ENCODE measurements at regions of chr1 and their contacts with region 1.

Region 1: GRCh38 chr1:192559115-192560006 is 16.2 kb upstream of the RGS1 start:
- DNase-seq: no peak
- H3K4me3 ChIP-seq: no peak overlapping the region
- H3K27ac ChIP-seq: peak overlapping the region; percentile 0 to 21 (median 1)
- H3K4me1 ChIP-seq: no peaks in the 10 kb centered on the region
- H3K27me3 ChIP-seq: no peaks in the 10 kb centered on the region
- CTCF ChIP-seq: no peak
- POLR2A ChIP-seq: no peak

Region 2: GRCh38 chr1:192284927-192285326 is 274.4 kb before region 1 on chr1:
- intact Hi-C with region 1: no loop called
- DNase-seq: no peak
- H3K4me3 ChIP-seq: no peak overlapping the region
- H3K27ac ChIP-seq: no peak overlapping the region
- H3K4me1 ChIP-seq: no peaks in the 10 kb centered on the region
- H3K27me3 ChIP-seq: no peaks in the 10 kb centered on the region
- CTCF ChIP-seq: no peak
- POLR2A ChIP-seq: no peak

Region 3: DNA sequence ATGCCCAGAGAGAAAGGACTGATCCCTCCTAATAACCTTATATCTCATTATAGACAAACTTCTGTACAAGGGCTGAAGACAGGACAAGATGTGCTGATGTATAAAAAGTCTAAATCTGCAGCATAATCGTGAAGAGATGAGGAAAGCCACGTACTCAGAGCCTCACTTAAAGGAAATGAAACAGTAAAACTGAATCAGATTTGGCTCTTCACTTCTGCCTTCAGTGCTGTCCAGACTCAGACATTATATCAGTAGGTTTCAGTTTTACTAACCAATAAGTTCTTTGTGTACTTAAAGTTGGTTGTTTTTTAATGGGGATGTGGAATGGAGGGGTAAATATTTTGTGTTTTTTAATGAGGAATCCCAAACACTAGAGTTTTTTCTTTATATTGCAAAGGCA is 29.1 kb before region 1 on chr1:
- intact Hi-C with region 1: no loop called
- DNase-seq: no peak
- H3K4me3 ChIP-seq: no peak overlapping the region
- H3K27ac ChIP-seq: no peak overlapping the region
- H3K4me1 ChIP-seq: no peaks in the 10 kb centered on the region
- H3K27me3 ChIP-seq: no peaks in the 10 kb centered on the region
- CTCF ChIP-seq: no peak
- POLR2A ChIP-seq: no peak

Region 4: GRCh38 chr1:192575499-192576189 is 16.3 kb after region 1 on chr1 and contains the start of gene RGS1:
- intact Hi-C with region 1: loop called (anchors 2 kb)
- DNase-seq: peak; percentile 41 to 50
- H3K4me3 ChIP-seq: no peak within 1 kb of the TSS
- H3K27ac ChIP-seq: no peak within 1 kb of the TSS
- H3K4me1 ChIP-seq: peaks cover 3 to 7% of the 10 kb centered on the region in 2 donors
- H3K27me3 ChIP-seq: no peaks in the 10 kb centered on the region
- CTCF ChIP-seq: no peak
- POLR2A ChIP-seq: peak in 1 of 2 donors; percentile 45
- total RNA-seq, gene RGS1: 19.7 to 32.6 (median 23.0) TPM